BJ (cell line): ENCODE measurements at regions of chr14 and their contacts with region 1.

Region 1: GRCh38 chr14:36553656-36554260 is 28.7 kb downstream of the NKX2-8 start:
- DNase-seq: no peak
- H3K4me3 ChIP-seq: no peak overlapping the region
- H3K27me3 ChIP-seq: no peaks in the 10 kb centered on the region
- CTCF ChIP-seq: peak; percentile 79

Region 2: DNA sequence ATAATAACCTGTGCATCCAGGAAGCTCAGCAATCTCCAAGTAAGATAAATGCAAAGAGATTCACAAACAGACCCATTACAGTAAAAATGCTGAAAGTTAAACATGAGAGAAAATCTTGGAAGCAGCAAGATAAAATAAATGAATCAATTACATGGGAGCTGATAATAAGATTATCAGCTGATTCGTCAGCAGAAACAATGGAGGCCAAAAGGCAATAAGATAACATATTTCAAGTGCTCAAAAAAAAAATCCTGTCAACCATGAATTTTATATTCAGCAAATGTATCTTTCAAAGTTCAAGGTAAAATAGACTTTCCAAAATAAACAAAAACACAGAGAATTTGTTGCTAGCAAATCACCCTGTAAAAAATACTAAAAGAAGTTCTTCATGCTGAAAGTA is 196.9 kb before region 1 on chr14:
- CTCF ChIA-PET with region 1: no interaction called
- POLR2A ChIA-PET with region 1: no interaction called
- DNase-seq: no peak
- H3K4me3 ChIP-seq: no peak overlapping the region
- H3K27me3 ChIP-seq: no peaks in the 10 kb centered on the region; the same call in 1 of the 2 replicates
- CTCF ChIP-seq: no peak

Region 3: DNA sequence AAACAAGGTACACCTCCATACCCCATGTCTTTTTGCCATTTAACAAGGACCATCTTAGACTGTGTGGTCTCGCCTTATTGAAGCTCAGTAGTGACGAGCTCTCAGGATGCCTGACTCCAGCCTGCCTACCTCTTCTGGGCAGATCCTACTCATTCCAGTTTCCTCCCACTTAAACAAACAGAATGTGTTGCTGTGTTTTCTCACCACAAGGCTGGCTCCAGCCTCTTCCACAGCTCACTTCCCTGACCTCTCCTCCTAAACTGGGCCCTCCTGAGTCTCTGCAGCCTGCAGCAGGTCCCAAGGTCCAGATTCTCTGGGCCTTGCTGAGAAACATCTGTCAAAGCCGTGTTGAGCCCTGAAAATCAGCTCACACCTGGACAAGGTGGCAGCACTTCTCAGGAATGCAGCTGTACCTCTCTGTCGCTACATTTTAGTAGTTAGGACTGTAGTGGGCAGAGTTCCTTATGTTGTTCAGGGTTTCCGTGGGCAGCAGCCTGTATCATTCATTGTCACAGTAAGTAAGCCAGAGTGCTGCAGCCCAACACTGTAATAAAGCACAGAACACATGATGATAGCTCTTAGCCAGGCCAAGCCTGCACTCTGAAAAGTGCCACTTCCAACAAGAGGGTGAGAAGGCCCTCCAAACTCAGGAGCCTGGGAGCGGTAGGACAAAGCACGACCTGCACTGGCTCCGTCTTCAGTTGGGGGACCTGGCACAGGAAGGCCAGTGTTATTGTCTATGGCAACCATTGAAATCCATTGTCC is 102.3 kb before region 1 on chr14:
- CTCF ChIA-PET with region 1: no interaction called
- POLR2A ChIA-PET with region 1: no interaction called
- DNase-seq: no peak
- H3K4me3 ChIP-seq: no peak overlapping the region
- H3K27me3 ChIP-seq: peaks cover 2% of the 10 kb centered on the region; the same call in 1 of the 2 replicates
- CTCF ChIP-seq: no peak

Region 4: GRCh38 chr14:36520601-36521525 is 32.9 kb before region 1 on chr14:
- CTCF ChIA-PET with region 1: interaction called, 12 read pairs
- POLR2A ChIA-PET with region 1: no interaction called
- DNase-seq: no peak
- H3K4me3 ChIP-seq: no peak overlapping the region
- H3K27me3 ChIP-seq: peaks cover 73% of the 10 kb centered on the region
- CTCF ChIP-seq: peak; percentile 30; the same call in 1 of the 2 replicates

Region 5: GRCh38 chr14:36538051-36538450 is 15.7 kb before region 1 on chr14:
- CTCF ChIA-PET with region 1: interaction called, 17 read pairs
- POLR2A ChIA-PET with region 1: no interaction called
- DNase-seq: no peak
- H3K4me3 ChIP-seq: no peak overlapping the region
- H3K27me3 ChIP-seq: no peaks in the 10 kb centered on the region; the same call in 1 of the 2 replicates
- CTCF ChIP-seq: no peak

Region 6: GRCh38 chr14:36604757-36605505 is 51.2 kb after region 1 on chr14:
- CTCF ChIA-PET with region 1: interaction called, 36 read pairs
- POLR2A ChIA-PET with region 1: no interaction called
- DNase-seq: peak; percentile 5
- H3K4me3 ChIP-seq: no peak overlapping the region
- H3K27me3 ChIP-seq: no peaks in the 10 kb centered on the region; the same call in 1 of the 2 replicates
- CTCF ChIP-seq: peak; percentile 84

Region 7: GRCh38 chr14:36676236-36676635 is 122.5 kb after region 1 on chr14:
- CTCF ChIA-PET with region 1: no interaction called
- POLR2A ChIA-PET with region 1: no interaction called
- DNase-seq: no peak
- H3K4me3 ChIP-seq: no peak overlapping the region
- H3K27me3 ChIP-seq: 0 out of 2 replicates have a peak, but pooled peaks cover 1% of the 10 kb centered on the region
- CTCF ChIP-seq: no peak